Sciatic nerve (tissue), 2 donors: ENCODE measurements at regions of chr19 and their contacts with region 1.

Region 1: DNA sequence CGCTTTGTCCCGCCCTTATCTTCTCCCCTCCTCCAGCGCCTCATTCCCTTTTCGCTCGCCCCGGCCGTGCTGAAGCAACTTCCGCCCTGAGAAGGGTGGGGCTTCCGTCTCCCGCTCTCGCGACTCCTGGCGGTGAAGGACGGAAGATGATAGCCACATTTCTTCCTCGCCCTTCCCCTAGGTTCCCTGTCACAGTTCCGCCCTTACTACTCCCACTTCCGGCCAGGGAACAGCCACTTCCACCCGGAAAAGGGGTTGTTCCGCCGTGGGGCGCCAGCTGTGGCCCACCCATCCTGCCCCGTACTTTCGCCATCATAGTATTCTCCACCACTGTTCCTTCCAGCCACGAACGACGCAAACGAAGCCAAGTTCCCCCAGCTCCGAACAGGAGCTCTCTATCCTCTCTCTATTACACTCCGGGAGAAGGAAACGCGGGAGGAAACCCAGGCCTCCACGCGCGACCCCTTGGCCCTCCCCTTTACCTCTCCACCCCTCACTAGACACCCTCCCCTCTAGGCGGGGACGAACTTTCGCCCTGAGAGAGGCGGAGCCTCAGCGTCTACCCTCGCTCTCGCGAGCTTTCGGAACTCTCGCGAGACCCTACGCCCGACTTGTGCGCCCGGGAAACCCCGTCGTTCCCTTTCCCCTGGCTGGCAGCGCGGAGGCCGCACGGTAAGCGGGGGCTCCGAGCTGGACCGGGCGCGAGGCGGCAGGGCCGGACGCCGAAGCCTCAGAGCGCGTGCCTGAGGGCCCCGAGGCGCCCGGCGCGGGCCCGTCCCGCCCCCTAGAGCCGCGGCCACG is at the start of gene RPS19:
- DNase-seq: peak; percentile 100
- ATAC-seq: peak; percentile 98
- total RNA-seq, gene RPS19: 788 TPM

Region 2: GRCh38 chr19:41882568-41883462 is 23.0 kb after region 1 on chr19 and contains the start of gene ARHGEF1:
- intact Hi-C with region 1: loop called (anchors 1 kb)
- DNase-seq: peak; percentile 78
- ATAC-seq: peak; percentile 1
- total RNA-seq, gene ARHGEF1: 137 TPM

Region 3: DNA sequence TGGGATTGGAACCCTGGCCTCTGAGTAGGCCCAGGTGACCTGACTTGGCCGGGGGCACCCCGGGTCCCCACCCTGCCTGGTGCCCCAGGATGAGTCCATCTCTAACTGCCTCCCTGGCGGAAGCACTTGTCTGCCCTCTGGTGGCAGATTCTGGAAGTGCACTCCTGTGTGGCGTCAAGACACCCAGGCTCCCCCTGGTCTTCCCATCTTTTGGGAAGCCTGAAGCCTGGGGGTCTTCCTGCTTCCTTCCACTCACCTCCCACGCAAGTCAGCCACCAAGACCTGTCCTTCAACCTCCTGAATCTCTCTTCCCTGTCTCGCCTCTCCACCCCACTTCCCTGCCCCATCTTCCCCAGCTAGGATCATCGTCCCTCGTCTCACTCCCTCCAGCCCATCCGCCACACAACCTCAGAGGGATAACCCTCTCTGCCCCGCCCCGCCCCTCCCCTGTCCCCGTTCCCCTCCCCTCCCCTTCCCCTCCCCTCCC is 91.9 kb after region 1 on chr19:
- intact Hi-C with region 1: loop called (anchors 1 kb)
- DNase-seq: peak; percentile 90
- ATAC-seq: peak; percentile 78